ENCODE measurements at regions of chr2 and their contacts with region 1.

Region 1: DNA sequence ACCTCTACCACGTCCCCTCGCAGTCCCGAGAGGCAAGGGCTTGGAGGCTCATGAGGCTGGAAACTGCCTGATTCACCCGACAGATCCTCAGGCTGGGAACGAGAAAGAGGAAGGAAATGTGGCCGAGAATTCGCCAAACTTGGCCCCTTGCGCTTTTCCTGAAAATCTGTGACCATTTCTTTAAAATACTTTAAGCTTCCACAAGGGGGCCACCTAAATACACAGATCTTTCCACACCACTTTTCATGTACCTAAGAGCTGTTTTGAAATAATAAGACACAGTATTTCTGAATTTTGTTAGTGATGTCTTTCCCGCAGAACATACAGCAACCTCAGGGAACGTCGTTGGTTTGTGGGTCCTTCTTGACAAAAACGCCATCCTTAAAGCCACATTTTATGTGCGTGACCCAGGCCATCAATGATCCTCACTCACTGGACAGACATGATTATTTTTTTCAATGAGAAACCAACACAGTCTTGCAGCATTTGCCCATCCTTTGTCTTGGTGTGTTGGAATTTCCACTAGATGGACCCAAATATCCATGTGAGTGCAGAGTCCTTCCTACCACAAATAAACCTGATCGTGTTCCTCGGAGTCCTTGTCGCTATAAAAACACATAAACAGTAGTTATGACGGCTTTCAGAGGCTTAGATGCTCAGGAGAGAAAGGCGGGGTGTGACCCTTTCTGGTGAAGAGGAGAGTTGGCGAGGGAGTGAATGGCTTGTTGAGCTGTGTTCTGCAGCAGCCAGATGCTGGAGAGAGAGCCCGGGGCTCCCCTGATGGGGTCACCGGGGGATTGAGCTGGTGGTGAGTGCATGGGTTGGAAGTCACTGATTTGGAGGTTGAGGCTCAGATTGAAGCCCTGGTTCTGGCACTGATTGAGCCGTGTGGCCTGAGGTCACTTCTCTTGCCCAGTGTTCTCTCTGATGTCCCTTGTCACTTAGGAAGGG is 25.0 kb downstream of the DCDC2C start:
- DNase-seq: peak; percentile 83
- H3K4me3 ChIP-seq: peak overlapping the region; percentile 12
- H3K27ac ChIP-seq: no peak overlapping the region
- H3K4me1 ChIP-seq: peaks cover 6% of the 10 kb centered on the region
- H3K27me3 ChIP-seq: no peaks in the 10 kb centered on the region
- CTCF ChIP-seq: peak; percentile 65

Region 2: GRCh38 chr2:3743951-3744555 is 15.7 kb after region 1 on chr2:
- CTCF ChIA-PET with region 1: no interaction called
- POLR2A ChIA-PET with region 1: no interaction called
- intact Hi-C with region 1: no loop called
- DNase-seq: no peak
- H3K4me3 ChIP-seq: no peak overlapping the region
- H3K27ac ChIP-seq: no peak overlapping the region
- H3K4me1 ChIP-seq: peaks cover 14% of the 10 kb centered on the region
- H3K27me3 ChIP-seq: no peaks in the 10 kb centered on the region
- CTCF ChIP-seq: no peak

Region 3: GRCh38 chr2:3827673-3828575 is 99.5 kb after region 1 on chr2:
- CTCF ChIA-PET with region 1: interaction called, 4 read pairs
- POLR2A ChIA-PET with region 1: no interaction called
- intact Hi-C with region 1: loop called (anchors 5 kb)
- DNase-seq: peak; percentile 54
- H3K4me3 ChIP-seq: no peak overlapping the region
- H3K27ac ChIP-seq: no peak overlapping the region
- H3K4me1 ChIP-seq: no peaks in the 10 kb centered on the region
- H3K27me3 ChIP-seq: no peaks in the 10 kb centered on the region
- CTCF ChIP-seq: peak; percentile 82